Left lung (tissue), 14 donors: ENCODE measurements at regions of chr1 and their contacts with region 1.

Region 1: GRCh38 chr1:21334214-21335087 is 44.2 kb upstream of the ECE1 start:
- DNase-seq: peak; percentile 48 to 93 (median 78)
- ATAC-seq: peak; percentile 81
- H3K4me3 ChIP-seq: peak overlapping the region in 1 of 2 donors; percentile 23
- H3K27ac ChIP-seq: peak overlapping the region; percentile 70 to 95
- H3K4me1 ChIP-seq: peaks cover 46 to 96% of the 10 kb centered on the region in 2 donors
- H3K27me3 ChIP-seq: no peaks in the 10 kb centered on the region
- CTCF ChIP-seq: peak; percentile 74 to 79

Region 2: DNA sequence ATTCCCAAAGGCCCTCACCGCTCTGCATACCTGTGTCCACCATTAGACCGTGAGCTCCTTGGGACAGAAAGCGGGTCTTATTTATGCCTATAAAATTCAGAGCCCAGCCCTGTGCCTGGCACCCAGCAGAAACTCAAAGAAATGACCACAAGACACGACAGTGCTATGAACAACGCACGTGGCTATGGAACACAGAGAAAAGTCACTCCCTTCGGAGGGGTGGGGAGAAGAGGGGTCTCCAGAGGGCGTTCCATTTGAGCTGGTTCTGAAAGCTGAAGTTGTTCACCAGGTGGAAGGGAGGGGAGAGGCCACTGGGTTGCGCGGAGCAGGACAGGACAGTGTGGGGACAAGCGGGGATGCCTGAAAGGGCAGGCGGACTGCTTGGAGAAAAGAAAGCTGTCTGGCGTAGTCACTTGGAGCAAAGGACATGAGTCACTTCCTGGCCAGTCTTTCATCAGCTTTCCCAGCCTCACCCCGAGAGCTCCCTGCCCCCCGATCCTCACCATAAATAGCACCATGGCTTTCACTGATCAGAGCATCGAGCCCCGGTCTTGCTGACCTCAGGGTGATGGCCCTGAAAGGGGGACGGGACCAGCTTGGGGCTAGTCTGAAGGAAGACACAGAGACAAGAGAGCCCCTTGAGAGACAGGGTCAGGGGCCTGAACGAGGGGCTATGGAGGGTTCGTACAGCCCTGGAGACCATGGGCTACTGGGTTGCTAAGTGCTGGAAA is 72.7 kb before region 1 on chr1:
- intact Hi-C with region 1: loop called in 1 of 2 experiments (anchors 10 kb)
- DNase-seq: peak in 2 of 4 donors; percentile 58 to 71
- ATAC-seq: peak; percentile 76
- H3K4me3 ChIP-seq: peak overlapping the region in 1 of 2 donors; percentile 8
- H3K27ac ChIP-seq: peak overlapping the region; percentile 75 to 79
- H3K4me1 ChIP-seq: peaks cover 24 to 58% of the 10 kb centered on the region in 2 donors
- H3K27me3 ChIP-seq: no peaks in the 10 kb centered on the region
- CTCF ChIP-seq: no peak